HepG2 (cell line): ENCODE measurements at regions of chr11 and their contacts with region 1.

Region 1: GRCh38 chr11:57311109-57311936 is 13.4 kb downstream of the TNKS1BP1 start:
- DNase-seq: peak; percentile 84
- ATAC-seq: peak; percentile 90
- H3K4me3 ChIP-seq: peak overlapping the region; percentile 45 to 73 (median 57); a peak in 5 of 6 replicates
- H3K27ac ChIP-seq: peak overlapping the region; percentile 48
- H3K4me1 ChIP-seq: peaks cover 71% of the 10 kb centered on the region
- H3K27me3 ChIP-seq: no peaks in the 10 kb centered on the region
- CTCF ChIP-seq: no peak
- EP300 ChIP-seq: no peak
- POLR2A ChIP-seq: peak in 1 of 2 experiments; percentile 39; a peak in 3 of 4 replicates
- RAD21 ChIP-seq: no peak

Region 2: DNA sequence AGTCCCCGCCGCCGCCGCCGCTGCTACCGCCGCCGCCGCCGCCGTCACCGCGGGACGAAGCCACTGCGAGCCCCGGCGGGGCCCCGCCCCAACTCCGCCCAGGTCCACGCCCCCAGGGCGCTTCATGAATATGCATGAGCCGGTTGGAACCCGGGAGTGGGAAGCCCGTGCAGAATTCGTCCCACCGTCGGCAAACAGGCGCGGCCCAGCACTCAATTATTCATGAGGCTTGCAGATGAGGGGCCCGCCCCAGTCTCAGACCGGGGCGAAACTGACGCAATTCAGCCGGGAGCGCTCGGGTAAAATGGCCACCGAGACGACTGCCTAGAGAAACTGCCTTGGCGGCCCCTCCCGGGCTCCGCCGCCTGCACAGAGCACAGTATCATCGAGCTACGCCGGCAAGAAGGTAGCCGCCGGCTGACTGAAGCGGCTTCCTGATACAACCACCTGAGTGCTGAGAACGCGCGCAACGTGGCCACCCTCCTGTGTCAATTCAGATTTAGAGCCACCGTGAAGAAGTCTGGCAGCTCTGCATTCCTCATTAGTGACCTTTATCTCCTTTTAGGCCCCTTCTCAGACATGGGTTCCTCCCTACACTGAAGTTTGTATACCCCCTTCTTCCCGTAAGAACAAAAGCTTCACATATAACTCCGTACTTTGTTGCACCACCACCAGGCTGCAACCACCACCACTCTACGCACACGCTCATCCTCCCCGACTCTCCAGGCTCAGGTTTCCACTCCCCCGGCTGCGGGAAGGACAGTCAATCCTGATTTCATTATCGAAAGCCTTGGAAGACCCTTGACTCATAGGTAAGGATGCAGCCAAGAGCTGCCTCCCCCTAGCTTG is 13.8 kb after region 1 on chr11 and contains the start of gene TNKS1BP1:
- CTCF ChIA-PET with region 1: no interaction called
- POLR2A ChIA-PET with region 1: interaction called, 38 read pairs
- in situ Hi-C with region 1: no loop called
- intact Hi-C with region 1: loop called (anchors 1 kb)
- DNase-seq: peak; percentile 91
- ATAC-seq: peak; percentile 84
- H3K4me3 ChIP-seq: peak within 1 kb of the TSS; percentile 71 to 88 (median 76)
- H3K27ac ChIP-seq: peak within 1 kb of the TSS; percentile 90
- H3K4me1 ChIP-seq: peaks cover 51% of the 10 kb centered on the region
- H3K27me3 ChIP-seq: no peaks in the 10 kb centered on the region; a peak in 1 of 5 replicates
- CTCF ChIP-seq: no peak
- EP300 ChIP-seq: no peak
- POLR2A ChIP-seq: peak; percentile 61 to 65
- RAD21 ChIP-seq: no peak
- total RNA-seq, gene TNKS1BP1: 12.2 and 13.7 TPM in 2 replicates

Region 3: DNA sequence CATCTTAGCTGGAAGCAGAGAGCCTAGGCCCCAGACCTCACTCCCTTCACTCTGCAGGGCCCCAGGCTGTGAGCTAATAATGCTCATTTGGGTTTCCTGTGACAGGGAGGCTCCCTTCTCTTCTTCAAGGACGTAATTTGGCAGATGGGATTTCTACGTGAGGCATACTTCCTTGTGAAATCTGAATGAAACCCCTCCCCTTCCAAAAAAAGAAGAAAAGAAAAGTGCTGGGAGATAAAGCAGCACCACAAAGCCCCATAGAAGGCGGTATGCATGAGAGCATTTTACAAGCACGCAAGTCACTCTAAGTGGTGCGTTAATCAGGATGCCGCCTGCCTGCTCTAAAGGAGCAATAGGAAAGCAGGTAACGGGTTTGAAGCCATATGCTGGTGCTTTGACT is 32.5 kb after region 1 on chr11:
- CTCF ChIA-PET with region 1: no interaction called
- POLR2A ChIA-PET with region 1: no interaction called
- in situ Hi-C with region 1: no loop called
- intact Hi-C with region 1: no loop called
- DNase-seq: no peak
- ATAC-seq: no peak
- H3K4me3 ChIP-seq: no peak overlapping the region
- H3K27ac ChIP-seq: no peak overlapping the region
- H3K4me1 ChIP-seq: peaks cover 65% of the 10 kb centered on the region
- H3K27me3 ChIP-seq: peaks cover 1 to 25% of the 10 kb centered on the region in 2 experiments; a peak in 4 of 5 replicates
- CTCF ChIP-seq: no peak
- EP300 ChIP-seq: no peak
- POLR2A ChIP-seq: no peak
- RAD21 ChIP-seq: no peak